Activated naive CD4-positive, alpha-beta T cell treated with anti-CD3 and anti-CD28 coated beads for 36 hours (primary cell): ENCODE measurements at regions of chr12 and their contacts with region 1.

Region 1: DNA sequence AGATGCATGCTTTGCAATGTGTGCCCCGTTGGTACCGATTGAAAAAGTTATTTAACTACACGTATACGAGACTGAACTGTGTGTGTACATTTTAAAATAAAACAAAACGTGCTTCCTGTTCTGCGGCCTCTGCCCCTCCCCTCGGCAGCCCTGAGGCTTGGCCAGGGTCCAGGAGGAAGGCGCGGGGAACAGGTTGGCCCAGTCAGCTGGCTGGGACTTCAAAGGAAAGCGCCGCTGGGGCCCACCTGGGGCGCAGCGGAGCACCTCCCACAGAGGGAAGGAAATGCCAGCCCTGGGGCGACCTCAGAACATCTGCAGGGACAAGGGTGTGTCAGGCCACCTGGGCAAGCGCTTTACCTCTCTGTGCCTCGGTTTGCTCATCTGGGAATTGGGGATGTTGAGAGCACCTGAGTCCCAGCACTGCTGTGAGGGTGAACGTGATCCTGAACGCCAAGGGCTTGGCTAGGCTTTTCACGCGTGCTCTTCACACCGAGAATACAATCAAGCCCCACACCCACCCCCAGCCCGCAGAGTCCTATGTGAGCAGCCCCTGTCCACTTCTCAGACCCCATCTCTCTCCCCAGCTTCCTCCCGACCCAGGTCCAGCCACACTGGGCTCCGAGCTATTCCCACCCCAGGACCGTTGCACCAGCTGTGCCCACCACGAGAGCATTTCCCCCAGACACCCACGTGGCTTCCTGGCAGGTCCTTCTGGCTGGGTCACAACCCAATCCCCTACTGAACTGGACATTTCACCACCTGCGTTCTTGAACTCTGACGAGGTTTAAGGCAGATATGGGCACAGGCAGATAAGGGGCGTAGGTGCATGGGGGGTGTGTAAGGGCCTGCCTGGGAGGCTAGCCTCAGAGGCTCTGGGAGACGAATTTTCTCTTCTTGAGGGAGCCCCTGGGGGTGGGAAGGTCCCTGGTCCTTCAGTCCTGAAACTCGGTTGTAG is 41.9 kb upstream of the NCOR2 start:
- DNase-seq: peak; percentile 93
- H3K4me3 Mint-ChIP-seq: peak overlapping the region; percentile 33
- H3K27ac Mint-ChIP-seq: no peak overlapping the region
- H3K4me1 Mint-ChIP-seq: peaks cover 21% of the 10 kb centered on the region
- H3K27me3 Mint-ChIP-seq: peaks cover 2% of the 10 kb centered on the region

Region 2: DNA sequence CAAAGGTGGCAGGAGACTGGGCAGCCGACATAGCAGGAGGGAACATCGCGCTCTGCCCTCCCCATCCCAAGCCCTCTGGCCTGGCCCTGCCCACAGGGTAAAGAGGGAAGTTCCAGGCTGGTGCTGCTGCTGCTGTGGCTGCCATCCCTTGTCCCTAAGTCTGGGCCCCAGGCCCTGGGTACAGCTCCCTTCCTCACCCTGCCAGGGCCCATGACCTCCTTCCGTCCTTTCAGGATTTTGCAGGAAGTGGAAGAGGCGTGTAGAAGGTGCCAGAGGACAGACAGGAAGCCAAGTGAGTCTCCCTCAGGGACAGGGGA is 27.3 kb before region 1 on chr12:
- CTCF ChIA-PET with region 1: no interaction called
- intact Hi-C with region 1: no loop called
- DNase-seq: no peak
- H3K4me3 Mint-ChIP-seq: no peak overlapping the region
- H3K27ac Mint-ChIP-seq: no peak overlapping the region
- H3K4me1 Mint-ChIP-seq: no peaks in the 10 kb centered on the region
- H3K27me3 Mint-ChIP-seq: no peaks in the 10 kb centered on the region

Region 3: GRCh38 chr12:124636138-124636978 is 27.0 kb after region 1 on chr12:
- CTCF ChIA-PET with region 1: no interaction called
- intact Hi-C with region 1: loop called (anchors 1 kb)
- DNase-seq: peak; percentile 89
- H3K4me3 Mint-ChIP-seq: no peak overlapping the region
- H3K27ac Mint-ChIP-seq: no peak overlapping the region
- H3K4me1 Mint-ChIP-seq: peaks cover 20% of the 10 kb centered on the region
- H3K27me3 Mint-ChIP-seq: no peaks in the 10 kb centered on the region

Region 4: GRCh38 chr12:124680863-124681778 is 71.8 kb after region 1 on chr12:
- CTCF ChIA-PET with region 1: no interaction called
- intact Hi-C with region 1: no loop called
- DNase-seq: peak; percentile 55
- H3K4me3 Mint-ChIP-seq: no peak overlapping the region
- H3K27ac Mint-ChIP-seq: no peak overlapping the region
- H3K4me1 Mint-ChIP-seq: peaks cover 14% of the 10 kb centered on the region
- H3K27me3 Mint-ChIP-seq: no peaks in the 10 kb centered on the region